SK-N-SH (cell line): ENCODE measurements at regions of chr5 and their contacts with region 1.

Region 1: DNA sequence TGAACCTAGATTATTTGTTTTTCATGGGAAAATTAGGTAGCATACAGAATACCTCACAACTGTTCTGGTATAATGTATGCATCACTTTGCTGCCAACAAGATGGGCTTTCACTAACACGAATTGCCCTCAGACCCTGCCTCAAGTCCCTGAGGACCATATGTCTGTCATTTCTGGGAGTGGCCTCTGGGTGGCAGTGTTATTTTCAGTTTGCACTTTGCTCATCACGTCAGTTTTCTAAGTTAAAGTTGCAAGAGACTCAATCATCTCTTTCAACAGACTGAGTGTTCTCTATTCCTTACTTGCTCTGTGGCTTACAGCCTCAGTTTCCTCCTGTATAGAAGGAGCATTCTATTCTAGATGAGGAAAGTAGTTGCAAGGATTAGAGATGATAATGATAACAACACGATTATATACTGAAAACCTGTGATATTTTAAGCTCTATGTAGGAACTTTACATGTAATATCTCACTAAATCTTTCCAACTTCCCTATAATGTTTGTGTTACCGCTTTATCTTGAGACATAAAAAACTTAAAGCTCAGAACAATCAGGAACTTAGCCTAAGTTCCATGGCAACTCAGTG is 55.7 kb downstream of the TSSK1B start:
- DNase-seq: peak; percentile 69
- H3K4me3 ChIP-seq: no peak overlapping the region; a peak in 1 of 4 replicates
- H3K27ac ChIP-seq: no peak overlapping the region
- H3K4me1 ChIP-seq: no peaks in the 10 kb centered on the region
- H3K27me3 ChIP-seq: no peaks in the 10 kb centered on the region
- CTCF ChIP-seq: peak; percentile 83
- EP300 ChIP-seq: no peak
- RAD21 ChIP-seq: peak; percentile 78

Region 2: GRCh38 chr5:113390224-113390623 is 11.2 kb after region 1 on chr5:
- CTCF ChIA-PET with region 1: interaction called, 28 read pairs
- POLR2A ChIA-PET with region 1: no interaction called
- DNase-seq: no peak
- H3K4me3 ChIP-seq: no peak overlapping the region
- H3K27ac ChIP-seq: no peak overlapping the region
- H3K4me1 ChIP-seq: no peaks in the 10 kb centered on the region
- H3K27me3 ChIP-seq: no peaks in the 10 kb centered on the region; the same call in 1 of the 2 replicates
- CTCF ChIP-seq: no peak
- EP300 ChIP-seq: no peak
- RAD21 ChIP-seq: no peak

Region 3: GRCh38 chr5:113421693-113422092 is 42.6 kb after region 1 on chr5:
- CTCF ChIA-PET with region 1: interaction called, 14 read pairs
- POLR2A ChIA-PET with region 1: no interaction called
- DNase-seq: no peak
- H3K4me3 ChIP-seq: no peak overlapping the region
- H3K27ac ChIP-seq: no peak overlapping the region
- H3K4me1 ChIP-seq: no peaks in the 10 kb centered on the region; a peak in 1 of 4 replicates
- H3K27me3 ChIP-seq: no peaks in the 10 kb centered on the region
- CTCF ChIP-seq: no peak
- EP300 ChIP-seq: no peak
- RAD21 ChIP-seq: no peak

Region 4: GRCh38 chr5:113487781-113488644 is 109.0 kb after region 1 on chr5 and contains the start of gene MCC:
- CTCF ChIA-PET with region 1: interaction called, 13 read pairs
- POLR2A ChIA-PET with region 1: no interaction called
- DNase-seq: peak; percentile 92
- H3K4me3 ChIP-seq: peak within 1 kb of the TSS; percentile 84 to 85
- H3K27ac ChIP-seq: peak within 1 kb of the TSS; percentile 65 to 78; a peak in 3 of 4 replicates
- H3K4me1 ChIP-seq: peaks cover 5 to 10% of the 10 kb centered on the region in 2 experiments; a peak in 3 of 4 replicates
- H3K27me3 ChIP-seq: peaks cover 11% of the 10 kb centered on the region; the same call in 1 of the 2 replicates
- CTCF ChIP-seq: no peak
- EP300 ChIP-seq: peak in 1 of 2 experiments; percentile 17; a peak in 1 of 4 replicates
- RAD21 ChIP-seq: no peak
- polyA plus RNA-seq, gene MCC: 2.6 and 3.6 TPM in 2 replicates

Region 5: GRCh38 chr5:113513384-113514288 is 134.6 kb after region 1 on chr5 and contains the start of gene YTHDC2:
- CTCF ChIA-PET with region 1: interaction called, 46 read pairs
- POLR2A ChIA-PET with region 1: no interaction called
- DNase-seq: peak; percentile 89
- H3K4me3 ChIP-seq: peak within 1 kb of the TSS; percentile 78 to 92
- H3K27ac ChIP-seq: peak within 1 kb of the TSS; percentile 83
- H3K4me1 ChIP-seq: peaks cover 0 to 6% of the 10 kb centered on the region in 2 experiments; a peak in 2 of 4 replicates
- H3K27me3 ChIP-seq: no peaks in the 10 kb centered on the region; the same call in 1 of the 2 replicates
- CTCF ChIP-seq: peak; percentile 51
- EP300 ChIP-seq: no peak
- RAD21 ChIP-seq: peak; percentile 71
- polyA plus RNA-seq, gene YTHDC2: 3.5 and 4.7 TPM in 2 replicates